T-cell (primary cell): ENCODE measurements at regions of chr17 and their contacts with region 1.

Region 1: DNA sequence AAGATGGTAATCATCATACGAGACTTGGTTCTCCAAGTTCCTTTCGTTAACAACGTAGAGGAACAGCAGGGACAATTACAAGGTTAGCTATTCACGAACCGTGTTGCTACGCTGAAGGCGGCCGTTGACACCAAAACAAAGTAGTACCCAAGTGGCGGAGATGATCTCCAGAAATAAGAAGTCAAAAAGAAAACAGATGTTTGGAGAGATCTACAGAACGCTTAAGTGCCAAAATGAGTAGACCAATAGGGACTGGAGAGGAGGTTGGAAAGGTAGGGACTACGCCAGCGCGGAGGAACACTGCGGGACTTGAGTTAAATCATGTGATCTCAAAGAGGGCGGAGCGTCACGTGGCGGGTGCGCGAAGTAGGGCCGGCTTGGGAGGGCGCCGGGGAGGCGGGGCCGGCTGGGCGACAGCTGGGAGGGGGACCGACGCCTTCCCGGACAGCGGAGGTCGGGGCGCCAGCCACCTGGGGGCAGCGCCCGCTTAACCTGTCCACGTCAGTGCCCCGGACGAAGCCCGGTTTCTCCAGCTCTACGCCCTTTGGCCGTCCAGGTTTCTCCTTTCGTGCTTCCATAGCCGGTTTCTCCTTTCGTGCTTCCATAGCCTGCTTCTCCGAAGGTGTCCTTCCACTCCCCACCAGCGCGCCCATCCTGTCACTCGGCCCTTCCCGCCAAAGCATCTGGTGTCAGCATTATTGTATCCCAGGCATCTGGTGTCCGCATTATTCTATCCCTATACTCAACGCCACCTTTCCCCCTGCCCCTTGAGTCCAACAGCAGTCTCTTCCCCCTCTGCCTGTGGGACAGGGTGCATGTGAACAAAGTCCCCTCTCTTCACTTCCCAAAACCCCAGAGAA is 698 bp upstream of the GABARAP start:
- DNase-seq: peak; percentile 83 to 97 (median 91)
- ATAC-seq: peak; percentile 45 to 51 (median 49)
- H3K4me3 ChIP-seq: peak overlapping the region; percentile 89 to 96
- H3K4me3 Mint-ChIP-seq: peak overlapping the region; percentile 97 to 99 (median 98)
- H3K27ac ChIP-seq: peak overlapping the region; percentile 87
- H3K27ac Mint-ChIP-seq: peak overlapping the region; percentile 99 to 100
- H3K4me1 ChIP-seq: peaks cover 13 to 37% of the 10 kb centered on the region in 2 experiments
- H3K4me1 Mint-ChIP-seq: peaks cover 41 to 46% (median 42%) of the 10 kb centered on the region in 3 donors
- H3K27me3 ChIP-seq: no peaks in the 10 kb centered on the region
- H3K27me3 Mint-ChIP-seq: peaks cover 0 to 2% of the 10 kb centered on the region in 2 donors

Region 2: GRCh38 chr17:7191571-7192270 is 51.2 kb before region 1 on chr17:
- CTCF ChIA-PET with region 1: no interaction called
- POLR2A ChIA-PET with region 1: no interaction called
- DNase-seq: peak in 7 of 35 experiments; percentile 20 to 35 (median 29)
- ATAC-seq: peak in 3 of 4 experiments; percentile 40 to 72 (median 47)
- H3K4me3 ChIP-seq: no peak overlapping the region
- H3K4me3 Mint-ChIP-seq: no peak overlapping the region
- H3K27ac ChIP-seq: no peak overlapping the region
- H3K27ac Mint-ChIP-seq: no peak overlapping the region
- H3K4me1 ChIP-seq: no peaks in the 10 kb centered on the region
- H3K4me1 Mint-ChIP-seq: peaks cover 0 to 2% (median 0%) of the 10 kb centered on the region in 3 donors
- H3K27me3 ChIP-seq: no peaks in the 10 kb centered on the region
- H3K27me3 Mint-ChIP-seq: no peaks in the 10 kb centered on the region

Region 3: GRCh38 chr17:7219812-7220581 is 22.9 kb before region 1 on chr17 and contains the starts of genes ACADVL and DLG4:
- CTCF ChIA-PET with region 1: interaction called, 3 to 12 read pairs
- POLR2A ChIA-PET with region 1: interaction called in 1 of 2 experiments, 3 read pairs
- DNase-seq: peak in 34 of 35 experiments; percentile 45 to 82 (median 62)
- ATAC-seq: peak; percentile 66 to 76 (median 70)
- H3K4me3 ChIP-seq: peak within 1 kb of the TSS; percentile 81 to 86
- H3K4me3 Mint-ChIP-seq: peak within 1 kb of the TSS; percentile 89 to 91 (median 90)
- H3K27ac ChIP-seq: peak within 1 kb of the TSS; percentile 80
- H3K27ac Mint-ChIP-seq: peak within 1 kb of the TSS; percentile 98 to 99
- H3K4me1 ChIP-seq: peaks cover 39 to 60% of the 10 kb centered on the region in 2 experiments
- H3K4me1 Mint-ChIP-seq: peaks cover 52 to 57% (median 54%) of the 10 kb centered on the region in 3 donors
- H3K27me3 ChIP-seq: no peaks in the 10 kb centered on the region
- H3K27me3 Mint-ChIP-seq: no peaks in the 10 kb centered on the region
- total RNA-seq, gene ACADVL: 275 to 424 (median 385) TPM
- total RNA-seq, gene DLG4: 8.1 to 13.6 (median 9.3) TPM

Region 4: DNA sequence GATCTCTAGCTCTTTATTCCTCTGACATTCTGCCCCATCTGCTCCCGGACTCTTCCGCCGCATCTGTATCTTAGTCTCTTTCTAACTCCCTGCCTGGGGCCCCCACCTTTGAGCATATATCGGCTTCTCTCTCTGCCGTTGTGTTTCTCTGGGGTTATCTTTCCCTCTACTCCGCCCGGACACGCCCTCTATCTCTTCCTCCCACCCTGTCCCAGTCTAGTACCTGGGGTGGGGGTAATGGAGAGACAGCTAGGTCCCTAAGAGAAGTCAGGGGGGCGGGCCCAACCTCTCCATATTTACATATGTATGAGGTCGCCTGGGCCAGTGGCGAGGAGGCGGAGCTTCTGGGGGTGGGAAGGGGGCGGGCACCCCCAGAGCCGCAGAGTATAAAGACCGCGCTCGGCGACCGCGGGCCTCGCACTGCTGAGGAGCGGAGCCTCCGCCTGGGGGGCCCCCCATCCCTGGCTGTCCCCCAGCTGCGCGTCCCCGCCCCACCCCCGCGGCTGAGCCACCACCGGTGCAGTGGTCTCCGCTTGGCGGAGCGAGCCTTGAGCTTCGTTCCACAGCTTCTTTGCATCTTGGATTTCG is 407.7 kb after region 1 on chr17 and contains the start of gene ATP1B2:
- CTCF ChIA-PET with region 1: no interaction called
- POLR2A ChIA-PET with region 1: no interaction called
- DNase-seq: peak; percentile 39 to 85 (median 67)
- ATAC-seq: peak; percentile 90 to 94 (median 94)
- H3K4me3 ChIP-seq: peak within 1 kb of the TSS; percentile 31 to 73
- H3K4me3 Mint-ChIP-seq: peak within 1 kb of the TSS; percentile 79 to 88 (median 79)
- H3K27ac ChIP-seq: no peak within 1 kb of the TSS
- H3K27ac Mint-ChIP-seq: peak within 1 kb of the TSS in 1 of 2 donors; percentile 32
- H3K4me1 ChIP-seq: peaks cover 0 to 23% of the 10 kb centered on the region in 2 experiments
- H3K4me1 Mint-ChIP-seq: peaks cover 12 to 25% (median 18%) of the 10 kb centered on the region in 3 donors
- H3K27me3 ChIP-seq: peaks cover 0 to 72% of the 10 kb centered on the region in 2 experiments
- H3K27me3 Mint-ChIP-seq: peaks cover 20 to 60% of the 10 kb centered on the region in 2 donors
- total RNA-seq, gene ATP1B2: 0.07 to 0.57 (median 0.43) TPM in 4 of 5 donors, not detected in the other